IMR-90 (cell line): ENCODE measurements at regions of chr1 and their contacts with region 1.

Region 1: GRCh38 chr1:107750358-107750959 is 214.5 kb downstream of the VAV3 start:
- DNase-seq: peak; percentile 43
- ATAC-seq: peak; percentile 59; the same call in 1 of the 2 replicates
- H3K4me3 ChIP-seq: no peak overlapping the region
- H3K27ac ChIP-seq: no peak overlapping the region
- H3K4me1 ChIP-seq: no peaks in the 10 kb centered on the region
- H3K27me3 ChIP-seq: no peaks in the 10 kb centered on the region
- CTCF ChIP-seq: peak; percentile 57
- POLR2A ChIP-seq: no peak
- RAD21 ChIP-seq: peak; percentile 64

Region 2: GRCh38 chr1:106022312-106022902 is 1728.1 kb before region 1 on chr1:
- CTCF ChIA-PET with region 1: no interaction called
- POLR2A ChIA-PET with region 1: no interaction called
- dilution Hi-C with region 1: no loop called
- in situ Hi-C with region 1: no loop called
- intact Hi-C with region 1: loop called (anchors 5 kb)
- DNase-seq: no peak
- ATAC-seq: no peak
- H3K4me3 ChIP-seq: no peak overlapping the region
- H3K27ac ChIP-seq: no peak overlapping the region
- H3K4me1 ChIP-seq: no peaks in the 10 kb centered on the region
- H3K27me3 ChIP-seq: no peaks in the 10 kb centered on the region
- CTCF ChIP-seq: peak; percentile 34; the same call in 1 of the 2 replicates
- POLR2A ChIP-seq: no peak
- RAD21 ChIP-seq: no peak

Region 3: GRCh38 chr1:107277022-107277421 is 473.4 kb before region 1 on chr1:
- CTCF ChIA-PET with region 1: no interaction called
- POLR2A ChIA-PET with region 1: no interaction called
- dilution Hi-C with region 1: no loop called
- in situ Hi-C with region 1: no loop called
- intact Hi-C with region 1: loop called (anchors 1 kb)
- DNase-seq: peak; percentile 36
- ATAC-seq: peak; percentile 64
- H3K4me3 ChIP-seq: no peak overlapping the region
- H3K27ac ChIP-seq: no peak overlapping the region
- H3K4me1 ChIP-seq: no peaks in the 10 kb centered on the region
- H3K27me3 ChIP-seq: no peaks in the 10 kb centered on the region
- CTCF ChIP-seq: peak; percentile 30
- POLR2A ChIP-seq: no peak
- RAD21 ChIP-seq: no peak; the same call in 1 of the 2 replicates

Region 4: DNA sequence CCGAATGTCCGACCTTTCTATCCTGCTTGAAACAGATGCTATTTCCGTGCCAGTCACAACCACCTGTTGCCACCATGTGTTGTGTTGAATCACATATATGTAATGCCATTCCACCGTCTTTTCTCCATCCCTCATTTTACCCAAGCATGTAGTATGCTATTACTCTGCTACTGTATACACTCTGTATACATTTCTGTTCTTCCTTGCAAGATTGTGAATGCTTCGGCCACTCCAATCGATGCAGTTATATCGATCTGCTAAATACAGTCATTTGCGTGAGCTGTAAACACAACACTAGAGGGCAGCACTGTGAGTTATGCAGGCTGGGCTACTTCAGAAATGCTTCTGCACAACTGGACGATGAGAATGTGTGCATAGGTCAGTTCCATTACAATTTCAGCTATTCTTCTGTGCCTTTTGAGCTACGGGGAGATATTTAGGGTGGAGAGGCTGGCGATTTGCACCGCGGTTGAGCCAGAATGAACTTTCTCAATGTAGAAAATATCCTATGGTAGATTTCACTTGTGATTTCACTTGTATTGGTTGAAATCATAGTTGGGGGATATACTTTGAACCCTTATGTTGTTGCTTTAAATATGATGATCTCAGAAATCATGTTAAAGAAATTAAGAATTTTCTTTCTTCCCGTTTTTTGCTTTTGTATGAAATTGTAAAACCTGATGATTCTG is 319.8 kb before region 1 on chr1:
- CTCF ChIA-PET with region 1: no interaction called
- POLR2A ChIA-PET with region 1: no interaction called
- dilution Hi-C with region 1: no loop called
- in situ Hi-C with region 1: loop called (anchors 10 kb)
- intact Hi-C with region 1: loop called (anchors 1 kb)
- DNase-seq: peak; percentile 38
- ATAC-seq: no peak
- H3K4me3 ChIP-seq: no peak overlapping the region
- H3K27ac ChIP-seq: no peak overlapping the region
- H3K4me1 ChIP-seq: no peaks in the 10 kb centered on the region
- H3K27me3 ChIP-seq: no peaks in the 10 kb centered on the region
- CTCF ChIP-seq: peak; percentile 41; the same call in 1 of the 2 replicates
- POLR2A ChIP-seq: no peak
- RAD21 ChIP-seq: peak; percentile 31

Region 5: DNA sequence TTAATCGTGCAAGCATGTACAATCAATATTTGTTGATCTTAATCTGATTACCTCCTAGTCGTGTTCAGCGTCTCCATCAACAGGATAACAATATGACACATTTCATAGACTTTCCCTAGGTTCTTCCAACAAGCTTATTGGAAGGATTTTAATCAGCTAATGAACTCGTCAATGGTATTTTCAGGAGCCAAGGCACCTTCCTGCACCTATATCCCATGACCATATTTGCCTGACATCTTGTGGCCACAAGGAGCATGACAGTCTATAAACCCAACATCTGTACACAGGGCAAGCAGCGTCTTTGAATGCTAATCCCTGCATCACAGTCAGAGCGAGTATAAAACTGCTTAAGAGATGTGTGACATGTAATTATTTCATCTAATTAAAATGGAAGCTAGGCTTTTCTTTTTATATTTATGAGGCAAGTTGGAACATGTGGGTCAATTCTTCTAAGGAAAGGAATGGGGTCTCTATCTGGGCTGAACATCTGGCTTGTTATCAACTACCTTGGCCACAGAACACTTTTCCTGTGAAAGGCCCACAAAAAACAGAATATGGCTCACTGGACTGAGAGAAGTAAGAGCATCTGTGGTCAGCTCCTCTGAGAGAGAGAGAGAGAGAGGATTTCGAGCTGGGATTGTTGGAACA is 220.8 kb before region 1 on chr1:
- CTCF ChIA-PET with region 1: interaction called, 3 read pairs
- POLR2A ChIA-PET with region 1: interaction called, 4 read pairs
- dilution Hi-C with region 1: no loop called
- in situ Hi-C with region 1: no loop called
- intact Hi-C with region 1: loop called (anchors 10 kb)
- DNase-seq: peak; percentile 35
- ATAC-seq: peak; percentile 91
- H3K4me3 ChIP-seq: no peak overlapping the region
- H3K27ac ChIP-seq: no peak overlapping the region
- H3K4me1 ChIP-seq: no peaks in the 10 kb centered on the region
- H3K27me3 ChIP-seq: no peaks in the 10 kb centered on the region
- CTCF ChIP-seq: peak; percentile 49
- POLR2A ChIP-seq: no peak
- RAD21 ChIP-seq: peak; percentile 42